PC-3 (cell line): ENCODE measurements at regions of chr1 and their contacts with region 1.

Region 1: GRCh38 chr1:107162745-107163144 is 21.9 kb downstream of the NTNG1 start:
- DNase-seq: peak; percentile 78
- ATAC-seq: peak; percentile 96
- H3K4me3 ChIP-seq: no peak overlapping the region
- H3K27ac ChIP-seq: peak overlapping the region; percentile 20; the same call in 1 of the 2 replicates
- H3K4me1 ChIP-seq: peaks cover 10% of the 10 kb centered on the region
- H3K27me3 ChIP-seq: no peaks in the 10 kb centered on the region
- CTCF ChIP-seq: no peak

Region 2: DNA sequence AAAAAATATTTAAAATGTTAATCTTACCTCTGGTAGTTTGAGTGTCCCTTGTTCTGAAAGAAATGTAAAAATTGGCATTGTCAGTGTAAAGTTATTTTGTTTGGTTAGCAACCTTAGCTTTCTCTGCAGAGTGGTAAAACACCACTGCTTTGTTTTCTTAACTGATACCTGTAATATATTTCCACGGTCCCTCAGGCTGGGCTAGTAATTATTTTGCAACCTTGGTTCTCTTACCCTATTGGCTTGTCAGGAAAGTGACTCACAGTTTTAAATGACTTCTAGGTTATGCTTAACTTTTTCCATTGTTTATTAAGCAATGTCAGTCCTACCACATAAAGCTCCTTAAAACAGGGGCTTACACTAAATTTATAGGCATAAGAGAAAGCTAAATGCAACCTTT is 525.6 kb after region 1 on chr1:
- CTCF ChIA-PET with region 1: no interaction called
- POLR2A ChIA-PET with region 1: no interaction called
- intact Hi-C with region 1: loop called (anchors 10 kb)
- DNase-seq: peak; percentile 94
- ATAC-seq: peak; percentile 85
- H3K4me3 ChIP-seq: peak overlapping the region; percentile 22; the same call in 1 of the 2 replicates
- H3K27ac ChIP-seq: peak overlapping the region; percentile 88
- H3K4me1 ChIP-seq: peaks cover 63% of the 10 kb centered on the region
- H3K27me3 ChIP-seq: no peaks in the 10 kb centered on the region
- CTCF ChIP-seq: no peak